Uterus (tissue), 4 donors: ENCODE measurements at regions of chr22 and their contacts with region 1.

Region 1: DNA sequence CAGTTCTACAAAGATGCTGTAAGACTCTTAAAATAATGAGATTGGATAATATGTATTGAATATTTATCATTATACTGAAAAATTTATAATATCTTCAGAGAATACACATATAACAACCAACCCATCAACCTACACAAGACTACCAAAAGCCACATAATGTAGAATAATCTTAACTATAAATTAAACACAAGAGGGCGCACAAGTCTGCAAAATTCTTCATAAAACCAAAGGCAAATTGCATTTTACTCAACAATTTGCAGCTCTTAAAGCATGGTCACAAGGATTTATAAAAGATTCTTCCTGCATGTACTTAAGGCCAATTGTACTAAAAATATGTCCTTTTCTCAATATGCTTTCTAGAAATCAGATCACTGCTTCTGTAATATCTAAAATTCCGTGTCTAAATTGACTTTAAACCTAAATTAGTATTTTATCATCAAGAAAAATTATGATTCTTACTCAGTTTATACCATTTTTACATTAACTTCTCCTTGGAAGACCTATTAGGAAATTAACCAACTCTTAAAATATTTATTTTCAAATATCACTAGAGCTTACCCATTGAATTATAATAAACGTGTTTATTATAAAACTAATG is 79.0 kb downstream of the TTC28 start:
- DNase-seq: no peak
- H3K4me3 ChIP-seq: no peak overlapping the region
- H3K27ac ChIP-seq: no peak overlapping the region
- H3K4me1 ChIP-seq: no peaks in the 10 kb centered on the region
- H3K27me3 ChIP-seq: no peaks in the 10 kb centered on the region
- CTCF ChIP-seq: peak; percentile 43 to 75 (median 52)
- POLR2A ChIP-seq: no peak

Region 2: DNA sequence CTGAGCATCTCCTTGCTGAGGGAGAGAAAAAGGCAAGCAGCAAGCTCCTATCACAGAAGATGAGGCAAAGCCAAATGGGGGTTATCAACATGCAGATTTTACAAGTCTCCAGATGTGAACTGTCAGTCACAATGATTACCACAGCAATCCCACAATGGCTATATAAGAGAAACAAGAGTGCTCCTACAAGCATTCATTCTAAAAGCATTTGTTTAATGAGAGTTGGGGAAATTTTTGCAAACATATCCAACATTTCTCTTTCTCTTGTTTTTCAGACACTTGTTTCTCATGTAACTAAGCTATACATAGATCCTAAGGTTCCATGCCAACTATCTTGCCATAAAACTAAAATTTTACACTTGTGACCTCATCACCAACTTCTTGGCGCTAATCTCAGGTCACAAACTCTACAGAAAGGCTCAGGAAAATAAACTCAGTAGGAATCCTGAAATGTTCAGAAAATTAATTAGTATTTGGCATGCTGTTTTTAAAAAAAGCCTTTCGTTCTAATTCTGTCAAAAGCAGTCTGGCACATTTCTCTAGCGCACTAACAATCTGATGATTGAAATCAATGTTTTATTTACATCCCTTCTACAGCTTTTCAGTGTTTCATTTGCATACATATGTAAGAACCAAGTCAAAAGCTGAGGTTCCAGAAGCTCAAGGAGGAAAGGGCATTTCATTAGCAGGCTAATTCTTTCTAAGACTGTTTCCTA is 120.5 kb before region 1 on chr22:
- intact Hi-C with region 1: no loop called
- DNase-seq: no peak
- H3K4me3 ChIP-seq: no peak overlapping the region
- H3K27ac ChIP-seq: peak overlapping the region in 1 of 2 donors; percentile 5
- H3K4me1 ChIP-seq: peaks cover 0 to 3% of the 10 kb centered on the region in 2 donors
- H3K27me3 ChIP-seq: no peaks in the 10 kb centered on the region
- CTCF ChIP-seq: no peak
- POLR2A ChIP-seq: no peak

Region 3: DNA sequence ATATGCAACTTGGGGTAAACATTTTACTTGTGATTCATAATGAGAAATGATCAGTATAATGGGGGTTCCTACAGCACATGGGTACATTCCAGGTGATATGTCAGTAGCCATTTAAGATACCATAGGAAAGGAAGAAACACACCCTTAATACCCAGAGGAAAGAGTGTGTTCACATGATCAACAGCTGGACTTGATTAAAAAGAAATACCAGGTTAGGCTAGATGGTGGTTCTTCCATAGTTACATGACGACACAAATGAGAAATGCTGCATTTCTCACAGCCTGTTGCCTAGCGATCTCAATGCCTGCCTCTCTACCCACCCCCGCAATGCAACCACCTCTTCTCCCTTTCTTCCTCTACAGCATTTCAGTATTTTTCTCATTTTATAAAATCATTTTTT is 17.8 kb before region 1 on chr22:
- intact Hi-C with region 1: no loop called
- DNase-seq: no peak
- H3K4me3 ChIP-seq: no peak overlapping the region
- H3K27ac ChIP-seq: no peak overlapping the region
- H3K4me1 ChIP-seq: no peaks in the 10 kb centered on the region
- H3K27me3 ChIP-seq: no peaks in the 10 kb centered on the region
- CTCF ChIP-seq: no peak
- POLR2A ChIP-seq: no peak

Region 4: GRCh38 chr22:28736296-28737155 is 135.9 kb after region 1 on chr22:
- intact Hi-C with region 1: no loop called
- DNase-seq: no peak
- H3K4me3 ChIP-seq: no peak overlapping the region
- H3K27ac ChIP-seq: no peak overlapping the region
- H3K4me1 ChIP-seq: peaks cover 0 to 4% of the 10 kb centered on the region in 2 donors
- H3K27me3 ChIP-seq: no peaks in the 10 kb centered on the region
- CTCF ChIP-seq: no peak
- POLR2A ChIP-seq: no peak

Region 5: GRCh38 chr22:28829358-28830181 is 228.9 kb after region 1 on chr22:
- intact Hi-C with region 1: loop called (anchors 5 kb)
- DNase-seq: peak; percentile 78 to 80
- H3K4me3 ChIP-seq: no peak overlapping the region
- H3K27ac ChIP-seq: no peak overlapping the region
- H3K4me1 ChIP-seq: no peaks in the 10 kb centered on the region
- H3K27me3 ChIP-seq: no peaks in the 10 kb centered on the region
- CTCF ChIP-seq: peak; percentile 95 to 97 (median 97)
- POLR2A ChIP-seq: no peak